Activated CD4-positive, alpha-beta memory T cell treated with anti-CD3 and anti-CD28 coated beads for 36 hours (primary cell): ENCODE measurements at regions of chr9 and their contacts with region 1.

Region 1: GRCh38 chr9:33024966-33025571 is at the start of gene DNAJA1:
- DNase-seq: peak; percentile 96
- H3K4me3 Mint-ChIP-seq: peak within 1 kb of the TSS; percentile 98
- H3K27ac Mint-ChIP-seq: peak within 1 kb of the TSS; percentile 95
- H3K4me1 Mint-ChIP-seq: peaks cover 57% of the 10 kb centered on the region
- H3K27me3 Mint-ChIP-seq: no peaks in the 10 kb centered on the region
- total RNA-seq, gene DNAJA1: 173 to 184 TPM

Region 2: GRCh38 chr9:32928145-32928763 is 96.8 kb before region 1 on chr9:
- CTCF ChIA-PET with region 1: no interaction called
- POLR2A ChIA-PET with region 1: no interaction called
- intact Hi-C with region 1: no loop called
- DNase-seq: no peak
- H3K4me3 Mint-ChIP-seq: no peak overlapping the region
- H3K27ac Mint-ChIP-seq: no peak overlapping the region
- H3K4me1 Mint-ChIP-seq: no peaks in the 10 kb centered on the region
- H3K27me3 Mint-ChIP-seq: no peaks in the 10 kb centered on the region

Region 3: DNA sequence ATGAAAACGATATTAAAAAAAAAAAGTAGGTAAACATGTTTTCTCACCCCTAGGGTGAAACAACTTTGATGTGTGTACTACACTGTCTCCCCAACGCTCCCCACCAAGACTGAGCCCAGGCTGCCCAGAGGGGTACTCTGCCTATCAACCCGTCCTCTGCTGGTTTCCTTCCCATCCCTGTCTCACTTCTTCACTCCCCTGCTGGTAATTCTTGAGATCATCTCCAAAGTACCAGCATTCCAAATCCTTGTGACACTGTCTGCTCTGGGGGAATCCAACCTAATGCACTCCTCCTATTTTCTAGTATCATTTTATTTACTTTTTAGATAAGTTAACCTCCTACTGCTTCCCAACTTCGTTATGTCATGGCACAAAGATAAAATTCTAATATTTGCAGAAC is 17.3 kb before region 1 on chr9:
- CTCF ChIA-PET with region 1: no interaction called
- POLR2A ChIA-PET with region 1: interaction called, 33 read pairs
- intact Hi-C with region 1: no loop called
- DNase-seq: no peak
- H3K4me3 Mint-ChIP-seq: no peak overlapping the region
- H3K27ac Mint-ChIP-seq: no peak overlapping the region
- H3K4me1 Mint-ChIP-seq: no peaks in the 10 kb centered on the region
- H3K27me3 Mint-ChIP-seq: no peaks in the 10 kb centered on the region

Region 4: DNA sequence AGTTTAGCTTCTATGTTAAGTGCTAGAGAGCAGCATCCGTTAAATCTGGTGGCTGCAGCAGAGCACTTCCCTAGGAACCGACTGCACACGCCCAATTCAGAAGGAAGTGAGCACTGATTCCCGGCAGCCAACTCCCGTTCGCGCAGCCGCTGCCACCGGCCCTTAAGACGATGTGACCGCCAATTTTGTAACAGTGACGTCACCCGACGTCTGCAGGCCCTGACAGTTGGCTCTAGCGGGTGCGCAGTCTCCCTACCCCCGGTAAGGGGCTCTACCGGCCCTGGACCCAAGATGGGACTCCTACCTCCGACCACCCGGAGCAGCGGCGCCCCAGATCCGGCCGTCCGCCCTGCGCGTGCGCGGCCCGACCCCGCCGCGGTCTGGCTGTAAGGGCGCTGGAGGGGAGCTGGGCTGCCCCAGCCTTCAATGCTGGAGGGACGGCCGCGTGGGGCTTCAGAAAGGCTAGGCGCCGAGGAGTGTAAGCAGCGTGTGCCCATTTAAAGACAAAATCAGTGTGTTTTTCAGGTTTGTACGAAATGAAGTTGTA is 19.1 kb after region 1 on chr9:
- CTCF ChIA-PET with region 1: interaction called, 4 read pairs
- POLR2A ChIA-PET with region 1: interaction called, 20 read pairs
- intact Hi-C with region 1: loop called (anchors 1 kb)
- DNase-seq: peak; percentile 81
- H3K4me3 Mint-ChIP-seq: peak overlapping the region; percentile 73
- H3K27ac Mint-ChIP-seq: peak overlapping the region; percentile 63
- H3K4me1 Mint-ChIP-seq: peaks cover 15% of the 10 kb centered on the region
- H3K27me3 Mint-ChIP-seq: no peaks in the 10 kb centered on the region

Region 5: DNA sequence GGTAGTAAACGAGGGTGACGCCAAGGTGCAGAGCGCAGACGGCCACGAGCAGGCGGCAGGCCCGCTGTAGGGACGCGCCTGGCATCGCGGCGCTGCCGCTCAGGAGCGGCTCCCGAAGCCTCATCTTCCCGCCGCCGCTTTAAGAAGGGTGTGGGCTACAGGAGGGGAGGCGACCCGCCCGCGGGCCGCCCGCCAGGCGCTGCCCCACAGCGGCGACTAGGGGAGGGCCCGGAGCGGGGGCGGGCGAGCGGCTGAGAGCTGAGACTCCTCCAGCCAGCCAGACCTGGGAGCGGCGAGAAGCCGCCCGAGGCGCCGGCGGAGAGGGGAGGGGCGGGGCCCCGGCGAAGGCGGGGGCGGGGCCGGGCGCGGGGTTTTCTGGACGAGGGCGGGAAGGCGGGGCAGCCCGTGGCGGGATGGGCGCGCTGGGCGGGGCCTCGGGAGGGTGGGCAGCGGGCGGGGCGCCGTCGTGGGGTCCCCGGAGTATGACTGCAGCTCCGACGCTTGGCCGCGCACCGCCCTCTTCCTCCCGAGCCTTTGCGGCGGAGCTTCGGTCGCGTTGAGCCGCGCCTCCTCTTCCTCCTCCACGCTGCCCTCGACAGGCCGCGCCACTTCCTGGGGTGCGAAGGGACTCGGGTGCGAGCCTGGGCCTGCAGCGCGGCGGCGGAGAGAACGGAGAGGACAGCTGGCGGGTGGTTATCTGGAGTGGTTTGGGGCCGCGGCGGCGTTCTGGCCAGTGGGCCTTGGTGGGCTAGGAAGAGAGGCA is 142.2 kb after region 1 on chr9 and contains the start of gene B4GALT1:
- CTCF ChIA-PET with region 1: interaction called, 3 read pairs
- POLR2A ChIA-PET with region 1: interaction called, 6 read pairs
- intact Hi-C with region 1: loop called (anchors 1 kb)
- DNase-seq: peak; percentile 98
- H3K4me3 Mint-ChIP-seq: peak within 1 kb of the TSS; percentile 95
- H3K27ac Mint-ChIP-seq: peak within 1 kb of the TSS; percentile 97
- H3K4me1 Mint-ChIP-seq: peaks cover 48% of the 10 kb centered on the region
- H3K27me3 Mint-ChIP-seq: no peaks in the 10 kb centered on the region
- total RNA-seq, gene B4GALT1: 76.6 to 78.0 TPM